MCF 10A (cell line): ENCODE measurements at regions of chr20 and their contacts with region 1.

Region 1: GRCh38 chr20:35954200-35954906 is at the start of gene SCAND1:
- DNase-seq: peak; percentile 97
- H3K4me3 Mint-ChIP-seq: peak within 1 kb of the TSS; percentile 97
- H3K27ac Mint-ChIP-seq: peak within 1 kb of the TSS; percentile 96
- H3K4me1 Mint-ChIP-seq: peaks cover 13% of the 10 kb centered on the region
- H3K27me3 Mint-ChIP-seq: no peaks in the 10 kb centered on the region
- CTCF ChIP-seq: peak; percentile 97
- total RNA-seq, gene SCAND1: 54.6 and 63.4 TPM in 2 replicates

Region 2: GRCh38 chr20:35699127-35699975 is 255.0 kb before region 1 on chr20 and contains the starts of genes NFS1 and ROMO1:
- CTCF ChIA-PET with region 1: interaction called, 12 read pairs
- POLR2A ChIA-PET with region 1: interaction called, 53 read pairs
- intact Hi-C with region 1: no loop called
- DNase-seq: peak; percentile 85
- H3K4me3 Mint-ChIP-seq: peak within 1 kb of the TSS; percentile 98
- H3K27ac Mint-ChIP-seq: peak within 1 kb of the TSS; percentile 99
- H3K4me1 Mint-ChIP-seq: peaks cover 19% of the 10 kb centered on the region
- H3K27me3 Mint-ChIP-seq: no peaks in the 10 kb centered on the region
- CTCF ChIP-seq: no peak
- total RNA-seq, gene NFS1: 27.6 and 28.6 TPM in 2 replicates
- total RNA-seq, gene ROMO1: 173 and 192 TPM in 2 replicates

Region 3: GRCh38 chr20:35791821-35792220 is 162.5 kb before region 1 on chr20:
- CTCF ChIA-PET with region 1: no interaction called
- POLR2A ChIA-PET with region 1: no interaction called
- intact Hi-C with region 1: no loop called
- DNase-seq: no peak
- H3K4me3 Mint-ChIP-seq: no peak overlapping the region
- H3K27ac Mint-ChIP-seq: peak overlapping the region; percentile 62
- H3K4me1 Mint-ChIP-seq: peaks cover 12% of the 10 kb centered on the region
- H3K27me3 Mint-ChIP-seq: no peaks in the 10 kb centered on the region
- CTCF ChIP-seq: no peak

Region 4: DNA sequence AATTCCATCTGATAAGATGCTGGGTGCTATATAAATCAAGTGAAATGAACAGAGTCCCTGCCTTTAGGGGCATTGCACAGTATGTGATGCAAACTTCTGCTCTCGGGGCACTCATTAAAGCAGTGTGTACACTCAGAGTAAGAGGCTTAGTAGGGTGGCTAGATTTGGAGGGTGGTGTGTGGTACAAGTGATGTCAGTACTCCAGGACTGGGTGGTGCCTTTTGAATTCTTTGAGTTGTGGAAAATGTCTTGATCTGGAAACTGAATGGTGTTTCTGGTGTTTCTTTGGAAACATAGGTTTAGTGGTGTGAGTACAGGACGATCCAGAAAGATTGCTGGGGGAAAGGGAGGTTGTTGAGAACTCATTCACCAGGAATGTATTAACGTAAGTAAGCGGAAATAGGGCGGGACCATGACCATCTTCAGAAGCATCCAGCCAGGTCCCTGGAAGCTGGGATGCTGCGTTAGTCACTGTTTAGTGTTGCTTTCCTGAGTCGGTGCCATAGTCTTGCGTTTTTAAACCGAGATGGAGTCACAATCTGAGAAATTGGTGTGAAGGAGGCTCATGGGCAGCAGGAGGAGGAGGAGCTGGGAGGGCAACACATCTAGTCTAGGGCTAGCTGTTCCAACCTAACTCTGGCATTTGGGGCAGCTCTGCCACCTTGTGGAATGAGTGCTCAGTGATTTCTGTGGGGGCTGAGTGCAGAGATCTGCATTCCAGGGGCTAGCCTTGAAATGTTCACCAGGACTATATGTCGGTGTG is 70.4 kb before region 1 on chr20:
- CTCF ChIA-PET with region 1: interaction called, 10 read pairs
- POLR2A ChIA-PET with region 1: interaction called, 70 read pairs
- intact Hi-C with region 1: no loop called
- DNase-seq: peak; percentile 99
- H3K4me3 Mint-ChIP-seq: peak overlapping the region; percentile 68
- H3K27ac Mint-ChIP-seq: peak overlapping the region; percentile 100
- H3K4me1 Mint-ChIP-seq: peaks cover 21% of the 10 kb centered on the region
- H3K27me3 Mint-ChIP-seq: no peaks in the 10 kb centered on the region
- CTCF ChIP-seq: peak; percentile 83

Region 5: GRCh38 chr20:35978041-35978513 is 23.7 kb after region 1 on chr20:
- CTCF ChIA-PET with region 1: interaction called, 16 read pairs
- POLR2A ChIA-PET with region 1: interaction called, 26 read pairs
- intact Hi-C with region 1: no loop called
- DNase-seq: peak; percentile 45
- H3K4me3 Mint-ChIP-seq: no peak overlapping the region
- H3K27ac Mint-ChIP-seq: no peak overlapping the region
- H3K4me1 Mint-ChIP-seq: peaks cover 6% of the 10 kb centered on the region
- H3K27me3 Mint-ChIP-seq: no peaks in the 10 kb centered on the region
- CTCF ChIP-seq: no peak

Region 6: DNA sequence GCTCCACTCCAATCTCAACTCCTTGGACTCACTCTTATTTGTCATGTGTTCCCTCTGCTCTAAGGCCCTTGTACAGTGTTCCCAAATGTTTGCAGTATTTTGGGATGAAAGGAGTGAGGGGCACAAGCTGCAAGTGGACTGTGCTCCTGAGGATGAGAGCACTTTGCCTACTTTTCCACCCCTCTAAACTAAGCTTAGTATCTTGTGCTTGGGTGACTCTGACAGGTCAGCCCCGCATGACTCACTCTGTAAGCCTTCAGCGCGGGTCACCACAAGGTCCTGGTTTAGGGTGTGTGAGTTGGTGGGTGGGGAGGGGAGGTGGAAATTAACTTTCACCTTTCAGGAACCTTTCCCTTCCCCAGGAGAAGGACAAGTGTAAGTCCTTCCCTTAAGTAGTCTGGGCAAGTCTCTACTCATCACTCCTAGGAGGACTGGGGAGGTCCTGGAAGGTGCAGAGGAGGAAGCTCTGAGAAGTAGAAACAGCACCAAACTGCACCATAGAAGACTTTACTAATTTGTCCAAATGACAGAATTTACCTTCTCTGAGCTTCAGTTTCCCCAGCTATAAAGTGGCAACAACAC is 131.4 kb after region 1 on chr20:
- CTCF ChIA-PET with region 1: interaction called, 8 read pairs
- POLR2A ChIA-PET with region 1: interaction called, 55 read pairs
- intact Hi-C with region 1: no loop called
- DNase-seq: peak; percentile 92
- H3K4me3 Mint-ChIP-seq: peak overlapping the region; percentile 45
- H3K27ac Mint-ChIP-seq: peak overlapping the region; percentile 85
- H3K4me1 Mint-ChIP-seq: peaks cover 23% of the 10 kb centered on the region
- H3K27me3 Mint-ChIP-seq: no peaks in the 10 kb centered on the region
- CTCF ChIP-seq: no peak

Region 7: GRCh38 chr20:36593347-36593929 is 639.1 kb after region 1 on chr20:
- CTCF ChIA-PET with region 1: no interaction called
- POLR2A ChIA-PET with region 1: no interaction called
- intact Hi-C with region 1: no loop called
- DNase-seq: no peak
- H3K4me3 Mint-ChIP-seq: no peak overlapping the region
- H3K27ac Mint-ChIP-seq: no peak overlapping the region
- H3K4me1 Mint-ChIP-seq: no peaks in the 10 kb centered on the region
- H3K27me3 Mint-ChIP-seq: no peaks in the 10 kb centered on the region
- CTCF ChIP-seq: no peak

Region 8: GRCh38 chr20:36605399-36606157 is 651.2 kb after region 1 on chr20 and contains the start of gene RAB5IF:
- CTCF ChIA-PET with region 1: interaction called, 3 read pairs
- POLR2A ChIA-PET with region 1: interaction called, 14 read pairs
- intact Hi-C with region 1: no loop called
- DNase-seq: peak; percentile 98
- H3K4me3 Mint-ChIP-seq: peak within 1 kb of the TSS; percentile 99
- H3K27ac Mint-ChIP-seq: peak within 1 kb of the TSS; percentile 98
- H3K4me1 Mint-ChIP-seq: peaks cover 4% of the 10 kb centered on the region
- H3K27me3 Mint-ChIP-seq: no peaks in the 10 kb centered on the region
- CTCF ChIP-seq: peak; percentile 90
- total RNA-seq, gene RAB5IF: 112 and 125 TPM in 2 replicates